Naive thymus-derived CD4-positive, alpha-beta T cell (primary cell): ENCODE measurements at regions of chr10 and their contacts with region 1.

Region 1: DNA sequence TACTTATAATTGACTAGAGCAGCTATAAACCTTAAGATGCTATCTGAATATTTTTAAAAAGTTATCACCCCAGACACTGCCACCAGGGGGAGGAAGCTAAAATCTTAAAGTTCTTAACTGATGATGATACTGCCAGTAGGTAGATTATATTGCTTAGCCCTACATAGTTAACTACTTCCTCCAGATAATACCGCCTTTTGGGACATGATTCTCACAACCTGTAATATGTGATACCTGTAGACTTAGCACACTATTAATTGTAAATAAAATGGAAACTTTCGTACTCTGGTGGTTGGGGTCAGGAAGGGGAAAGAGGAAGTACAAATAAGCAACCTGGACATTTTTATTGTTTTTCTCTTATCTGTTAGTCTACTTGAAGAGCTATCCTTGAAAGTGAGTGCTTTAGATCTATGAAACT is 268.9 kb downstream of the ADK start:
- DNase-seq: peak in 7 of 9 donors; percentile 15 to 53 (median 48)
- ATAC-seq: peak; percentile 63
- H3K4me3 ChIP-seq: no peak overlapping the region
- H3K4me3 Mint-ChIP-seq: no peak overlapping the region
- H3K27ac ChIP-seq: no peak overlapping the region
- H3K27ac Mint-ChIP-seq: peak overlapping the region in 1 of 9 donors; percentile 57
- H3K4me1 ChIP-seq: no peaks in the 10 kb centered on the region
- H3K4me1 Mint-ChIP-seq: peaks cover 5 to 12% (median 7%) of the 10 kb centered on the region in 7 donors
- H3K27me3 ChIP-seq: no peaks in the 10 kb centered on the region
- H3K27me3 Mint-ChIP-seq: no peaks in the 10 kb centered on the region

Region 2: GRCh38 chr10:73810735-73811465 is 609.1 kb before region 1 on chr10:
- CTCF ChIA-PET with region 1: no interaction called
- POLR2A ChIA-PET with region 1: no interaction called
- intact Hi-C with region 1: no loop called
- DNase-seq: peak; percentile 46 to 76 (median 71)
- ATAC-seq: peak; percentile 18
- H3K4me3 ChIP-seq: peak overlapping the region; percentile 69
- H3K4me3 Mint-ChIP-seq: peak overlapping the region; percentile 88 to 97 (median 94)
- H3K27ac ChIP-seq: peak overlapping the region; percentile 97
- H3K27ac Mint-ChIP-seq: peak overlapping the region; percentile 94 to 98 (median 96)
- H3K4me1 ChIP-seq: peaks cover 26 to 31% of the 10 kb centered on the region in 2 donors
- H3K4me1 Mint-ChIP-seq: peaks cover 31 to 54% (median 49%) of the 10 kb centered on the region in 7 donors
- H3K27me3 ChIP-seq: no peaks in the 10 kb centered on the region
- H3K27me3 Mint-ChIP-seq: no peaks in the 10 kb centered on the region

Region 3: GRCh38 chr10:74156919-74157289 is 263.1 kb before region 1 on chr10:
- CTCF ChIA-PET with region 1: no interaction called
- POLR2A ChIA-PET with region 1: no interaction called
- intact Hi-C with region 1: no loop called
- DNase-seq: no peak
- ATAC-seq: no peak
- H3K4me3 ChIP-seq: no peak overlapping the region
- H3K4me3 Mint-ChIP-seq: no peak overlapping the region
- H3K27ac ChIP-seq: no peak overlapping the region
- H3K27ac Mint-ChIP-seq: peak overlapping the region in 2 of 9 donors; percentile 2 to 56
- H3K4me1 ChIP-seq: peaks cover 5 to 10% of the 10 kb centered on the region in 2 donors
- H3K4me1 Mint-ChIP-seq: peaks cover 21 to 47% (median 34%) of the 10 kb centered on the region in 7 donors
- H3K27me3 ChIP-seq: no peaks in the 10 kb centered on the region
- H3K27me3 Mint-ChIP-seq: no peaks in the 10 kb centered on the region

Region 4: GRCh38 chr10:74361678-74362077 is 58.3 kb before region 1 on chr10:
- CTCF ChIA-PET with region 1: no interaction called
- POLR2A ChIA-PET with region 1: no interaction called
- intact Hi-C with region 1: no loop called
- DNase-seq: no peak
- ATAC-seq: no peak
- H3K4me3 ChIP-seq: no peak overlapping the region
- H3K4me3 Mint-ChIP-seq: no peak overlapping the region
- H3K27ac ChIP-seq: no peak overlapping the region
- H3K27ac Mint-ChIP-seq: no peak overlapping the region
- H3K4me1 ChIP-seq: no peaks in the 10 kb centered on the region
- H3K4me1 Mint-ChIP-seq: peaks cover 0 to 9% (median 4%) of the 10 kb centered on the region in 7 donors
- H3K27me3 ChIP-seq: no peaks in the 10 kb centered on the region
- H3K27me3 Mint-ChIP-seq: no peaks in the 10 kb centered on the region

Region 5: DNA sequence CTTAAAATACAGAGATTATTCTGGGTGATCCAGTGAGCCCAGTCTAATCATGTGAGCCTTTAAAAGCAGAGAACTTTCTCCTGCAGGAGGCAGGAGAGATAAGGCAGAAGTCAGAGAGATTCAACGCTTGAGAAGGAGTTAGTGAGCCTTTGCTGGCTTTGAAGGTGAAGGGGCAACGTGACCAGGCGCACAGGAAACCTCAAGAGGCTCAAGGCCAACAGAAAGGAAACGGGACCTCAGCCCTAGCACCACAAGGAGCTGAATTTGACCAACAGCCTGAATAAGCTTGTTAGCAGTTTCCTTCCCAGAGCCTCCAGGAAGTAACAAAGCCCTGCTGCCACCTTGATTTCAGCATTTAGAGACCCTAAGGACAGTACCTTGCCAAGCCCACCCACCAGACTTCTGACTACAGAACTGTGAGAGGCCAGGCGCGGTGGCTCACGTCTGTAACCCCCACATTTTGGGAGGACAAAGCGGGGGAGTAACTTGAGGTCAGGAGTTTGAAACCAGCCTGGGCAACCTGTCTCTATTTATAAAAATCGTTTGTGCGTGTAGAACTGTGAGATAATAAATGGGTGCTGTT is 319.1 kb after region 1 on chr10:
- CTCF ChIA-PET with region 1: interaction called, 3 read pairs
- POLR2A ChIA-PET with region 1: no interaction called
- intact Hi-C with region 1: loop called in 1 of 2 experiments (anchors 5 kb)
- DNase-seq: peak in 7 of 9 donors; percentile 4 to 40 (median 17)
- ATAC-seq: peak; percentile 73
- H3K4me3 ChIP-seq: no peak overlapping the region
- H3K4me3 Mint-ChIP-seq: peak overlapping the region in 9 of 10 donors; percentile 17 to 56 (median 34)
- H3K27ac ChIP-seq: no peak overlapping the region
- H3K27ac Mint-ChIP-seq: peak overlapping the region; percentile 44 to 87 (median 58)
- H3K4me1 ChIP-seq: peaks cover 7 to 15% of the 10 kb centered on the region in 2 donors
- H3K4me1 Mint-ChIP-seq: peaks cover 15 to 26% (median 17%) of the 10 kb centered on the region in 7 donors
- H3K27me3 ChIP-seq: no peaks in the 10 kb centered on the region
- H3K27me3 Mint-ChIP-seq: no peaks in the 10 kb centered on the region